Transverse colon (tissue), 4 donors: ENCODE measurements at regions of chr1 and their contacts with region 1.

Region 1: GRCh38 chr1:113133038-113133437 is 60.0 kb downstream of the LRIG2 start:
- DNase-seq: no peak
- H3K4me3 ChIP-seq: no peak overlapping the region
- H3K27ac ChIP-seq: no peak overlapping the region
- H3K4me1 ChIP-seq: peaks cover 0 to 7% (median 0%) of the 10 kb centered on the region in 4 donors
- H3K27me3 ChIP-seq: no peaks in the 10 kb centered on the region
- CTCF ChIP-seq: no peak
- EP300 ChIP-seq: no peak
- POLR2A ChIP-seq: no peak

Region 2: GRCh38 chr1:113467991-113468390 is 335.0 kb after region 1 on chr1:
- in situ Hi-C with region 1: loop called in 1 of 4 experiments (anchors 10 kb)
- intact Hi-C with region 1: no loop called
- DNase-seq: no peak
- H3K4me3 ChIP-seq: no peak overlapping the region
- H3K27ac ChIP-seq: no peak overlapping the region
- H3K4me1 ChIP-seq: peaks cover 0 to 9% (median 0%) of the 10 kb centered on the region in 4 donors
- H3K27me3 ChIP-seq: no peaks in the 10 kb centered on the region
- CTCF ChIP-seq: no peak
- EP300 ChIP-seq: no peak
- POLR2A ChIP-seq: no peak

Region 3: DNA sequence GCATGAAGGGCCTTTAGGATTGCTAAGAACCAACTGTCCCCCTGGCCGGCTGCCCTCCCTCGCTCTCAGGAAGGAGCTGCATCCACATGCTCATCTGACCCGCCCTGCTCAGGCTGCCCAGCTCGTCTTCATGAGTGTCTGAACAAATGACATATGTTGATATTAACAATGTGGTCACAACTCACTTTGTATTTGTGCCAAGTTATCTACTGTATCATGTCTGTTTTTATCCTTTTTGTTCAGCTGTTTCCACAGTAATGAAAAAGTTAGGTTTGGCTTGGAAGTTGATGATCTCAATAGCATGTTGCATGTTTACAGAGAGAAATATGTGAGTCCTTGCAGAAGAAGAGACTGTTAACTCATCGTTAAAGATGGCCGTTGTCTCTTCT is 551.1 kb after region 1 on chr1:
- in situ Hi-C with region 1: loop called in 1 of 4 experiments (anchors 10 kb)
- intact Hi-C with region 1: no loop called
- DNase-seq: peak; percentile 41
- H3K4me3 ChIP-seq: no peak overlapping the region
- H3K27ac ChIP-seq: peak overlapping the region; percentile 32 to 71 (median 56)
- H3K4me1 ChIP-seq: peaks cover 0 to 11% (median 3%) of the 10 kb centered on the region in 4 donors
- H3K27me3 ChIP-seq: no peaks in the 10 kb centered on the region
- CTCF ChIP-seq: no peak
- EP300 ChIP-seq: no peak
- POLR2A ChIP-seq: no peak